H1 (cell line): ENCODE measurements at regions of chr10 and their contacts with region 1.

Region 1: DNA sequence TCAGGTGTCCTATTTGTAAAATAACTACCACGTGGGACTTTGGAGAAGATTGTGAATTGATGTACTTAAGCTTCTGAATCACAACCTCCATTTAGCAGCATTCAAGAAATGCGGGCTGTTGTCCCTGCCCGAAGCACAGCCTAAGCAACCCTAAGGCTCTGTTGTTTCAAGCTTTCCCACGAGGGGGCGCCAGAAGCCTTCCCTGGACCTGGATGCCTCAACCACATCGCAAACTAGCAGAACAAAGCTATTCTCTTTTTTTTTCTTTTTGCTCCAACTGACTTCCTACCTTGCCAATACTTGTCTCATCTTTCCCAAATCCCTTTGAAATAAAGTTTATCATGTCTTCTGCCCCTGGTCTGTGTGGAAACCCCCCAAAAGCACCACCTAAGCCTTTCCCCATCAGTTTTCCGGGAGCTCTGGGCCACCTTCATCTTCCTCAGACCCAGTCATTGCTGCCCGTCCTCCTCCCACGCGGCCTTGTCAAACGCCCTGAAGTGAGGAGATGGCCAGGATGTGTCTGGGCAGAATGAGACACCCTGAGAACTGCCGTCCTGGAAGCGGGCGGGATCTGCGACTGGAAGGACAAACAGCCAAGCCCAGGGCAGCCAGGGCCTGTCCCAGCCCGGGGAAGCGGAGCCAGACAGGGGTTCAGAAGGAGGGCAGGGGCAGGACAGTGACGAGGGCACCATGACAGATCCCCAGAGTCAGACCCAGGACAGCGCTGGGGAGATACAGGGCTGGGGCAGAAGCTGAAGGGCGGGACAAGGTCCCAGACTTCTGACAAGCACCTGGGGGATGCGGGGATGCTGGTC is 112.7 kb downstream of the SLIT1 start:
- DNase-seq: peak; percentile 56 to 98
- H3K4me3 ChIP-seq: no peak overlapping the region
- H3K27ac ChIP-seq: no peak overlapping the region
- H3K4me1 ChIP-seq: peaks cover 0 to 8% (median under 1%) of the 10 kb centered on the region in 4 experiments; a peak in 3 of 7 replicates
- H3K27me3 ChIP-seq: peaks cover 0 to 3% (median 0%) of the 10 kb centered on the region in 4 experiments; a peak in 1 of 7 replicates
- CTCF ChIP-seq: peak; percentile 81 to 97 (median 97)
- EP300 ChIP-seq: peak in 1 of 2 experiments; percentile 22; a peak in 1 of 3 replicates
- POLR2A ChIP-seq: no peak
- RAD21 ChIP-seq: peak; percentile 98

Region 2: GRCh38 chr10:96930469-96930868 is 142.6 kb before region 1 on chr10:
- CTCF ChIA-PET with region 1: no interaction called
- POLR2A ChIA-PET with region 1: no interaction called
- DNase-seq: no peak
- H3K4me3 ChIP-seq: no peak overlapping the region
- H3K27ac ChIP-seq: no peak overlapping the region
- H3K4me1 ChIP-seq: no peaks in the 10 kb centered on the region
- H3K27me3 ChIP-seq: peaks cover 0 to 2% (median 0%) of the 10 kb centered on the region in 4 experiments; a peak in 1 of 7 replicates
- CTCF ChIP-seq: no peak
- EP300 ChIP-seq: no peak
- POLR2A ChIP-seq: no peak
- RAD21 ChIP-seq: no peak

Region 3: GRCh38 chr10:97037365-97038361 is 35.4 kb before region 1 on chr10:
- CTCF ChIA-PET with region 1: interaction called, 109 read pairs
- POLR2A ChIA-PET with region 1: no interaction called
- DNase-seq: peak; percentile 83 to 94
- H3K4me3 ChIP-seq: peak overlapping the region in 2 of 4 experiments; percentile 17 to 25; a peak in 2 of 8 replicates
- H3K27ac ChIP-seq: no peak overlapping the region
- H3K4me1 ChIP-seq: peaks cover under 1 to 7% (median 4%) of the 10 kb centered on the region in 4 experiments; a peak in 6 of 7 replicates
- H3K27me3 ChIP-seq: no peaks in the 10 kb centered on the region; a peak in 1 of 7 replicates
- CTCF ChIP-seq: peak; percentile 90 to 93 (median 90)
- EP300 ChIP-seq: no peak
- POLR2A ChIP-seq: no peak
- RAD21 ChIP-seq: peak; percentile 81 to 90

Region 4: DNA sequence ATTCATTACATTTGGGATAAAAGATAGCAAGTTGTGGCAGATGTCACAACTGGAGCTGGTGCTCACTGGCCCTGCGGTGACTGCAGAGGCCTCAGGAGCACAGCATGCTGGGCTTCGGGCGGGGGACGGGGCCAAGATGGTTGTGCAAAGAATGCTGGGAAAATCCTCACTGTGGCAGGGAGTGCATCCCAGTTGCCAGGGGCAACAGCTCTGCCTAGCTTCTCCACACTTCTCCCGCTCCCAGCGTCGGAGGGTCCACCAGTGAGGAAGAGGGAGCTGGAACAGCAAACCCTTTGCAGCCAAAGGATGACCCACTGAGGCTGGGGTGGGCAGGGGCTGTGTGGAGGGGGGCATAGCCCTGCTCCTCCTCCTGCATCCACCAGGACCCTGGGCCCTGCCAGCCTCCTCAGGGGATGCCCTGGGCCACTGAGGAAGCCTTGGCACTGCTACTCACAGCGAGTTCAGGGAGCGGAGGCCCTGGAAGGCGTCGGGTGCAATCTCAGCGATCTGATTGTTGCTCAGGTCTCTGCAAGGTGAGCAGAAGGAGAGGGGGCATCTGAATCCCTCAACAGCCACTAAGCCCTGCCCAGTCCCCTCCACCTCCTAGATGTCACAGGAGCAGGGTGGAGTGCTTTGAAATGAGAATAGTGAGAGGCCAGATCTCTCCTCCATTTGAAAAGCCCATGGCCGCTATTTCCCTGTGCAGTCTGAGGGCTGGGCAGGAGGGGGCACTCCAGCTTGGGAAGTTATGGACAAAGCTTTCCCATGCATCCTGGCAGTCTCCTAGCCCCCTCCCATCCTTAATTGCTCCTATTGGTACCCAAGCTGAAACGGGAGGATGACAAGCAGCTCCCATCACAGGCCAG is 13.8 kb before region 1 on chr10:
- CTCF ChIA-PET with region 1: interaction called, 335 read pairs
- POLR2A ChIA-PET with region 1: interaction called, 3 read pairs
- DNase-seq: peak in 1 of 2 experiments; percentile 77
- H3K4me3 ChIP-seq: no peak overlapping the region
- H3K27ac ChIP-seq: no peak overlapping the region
- H3K4me1 ChIP-seq: peaks cover 0 to 11% (median 2%) of the 10 kb centered on the region in 4 experiments; a peak in 3 of 7 replicates
- H3K27me3 ChIP-seq: no peaks in the 10 kb centered on the region
- CTCF ChIP-seq: peak; percentile 68 to 71 (median 69)
- EP300 ChIP-seq: no peak
- POLR2A ChIP-seq: no peak
- RAD21 ChIP-seq: peak; percentile 66 to 75

Region 5: GRCh38 chr10:97117372-97117771 is 44.3 kb after region 1 on chr10:
- CTCF ChIA-PET with region 1: interaction called, 759 read pairs
- POLR2A ChIA-PET with region 1: no interaction called
- DNase-seq: no peak
- H3K4me3 ChIP-seq: no peak overlapping the region
- H3K27ac ChIP-seq: no peak overlapping the region
- H3K4me1 ChIP-seq: peaks cover 0 to 4% (median 0%) of the 10 kb centered on the region in 4 experiments; a peak in 2 of 7 replicates
- H3K27me3 ChIP-seq: no peaks in the 10 kb centered on the region
- CTCF ChIP-seq: peak in 2 of 3 experiments; percentile 44 to 59; a peak in 3 of 4 replicates
- EP300 ChIP-seq: no peak
- POLR2A ChIP-seq: no peak
- RAD21 ChIP-seq: peak; percentile 72 to 73

Region 6: GRCh38 chr10:97149079-97149531 is 76.0 kb after region 1 on chr10:
- CTCF ChIA-PET with region 1: interaction called, 13 read pairs
- POLR2A ChIA-PET with region 1: interaction called, 3 read pairs
- DNase-seq: no peak
- H3K4me3 ChIP-seq: no peak overlapping the region
- H3K27ac ChIP-seq: no peak overlapping the region
- H3K4me1 ChIP-seq: peaks cover 0 to 3% (median 0%) of the 10 kb centered on the region in 4 experiments; a peak in 1 of 7 replicates
- H3K27me3 ChIP-seq: no peaks in the 10 kb centered on the region
- CTCF ChIP-seq: no peak
- EP300 ChIP-seq: no peak
- POLR2A ChIP-seq: no peak
- RAD21 ChIP-seq: no peak

Region 7: GRCh38 chr10:97179731-97180362 is 106.8 kb after region 1 on chr10:
- CTCF ChIA-PET with region 1: interaction called, 320 read pairs
- POLR2A ChIA-PET with region 1: no interaction called
- DNase-seq: peak; percentile 31 to 87
- H3K4me3 ChIP-seq: peak overlapping the region in 3 of 4 experiments; percentile 16 to 48 (median 27); a peak in 5 of 8 replicates
- H3K27ac ChIP-seq: no peak overlapping the region
- H3K4me1 ChIP-seq: peaks cover under 1 to 3% (median 2%) of the 10 kb centered on the region in 4 experiments; a peak in 6 of 7 replicates
- H3K27me3 ChIP-seq: peaks cover 10 to 30% (median 22%) of the 10 kb centered on the region in 4 experiments
- CTCF ChIP-seq: peak; percentile 80 to 84 (median 83)
- EP300 ChIP-seq: no peak
- POLR2A ChIP-seq: no peak
- RAD21 ChIP-seq: peak; percentile 80 to 88

Region 8: DNA sequence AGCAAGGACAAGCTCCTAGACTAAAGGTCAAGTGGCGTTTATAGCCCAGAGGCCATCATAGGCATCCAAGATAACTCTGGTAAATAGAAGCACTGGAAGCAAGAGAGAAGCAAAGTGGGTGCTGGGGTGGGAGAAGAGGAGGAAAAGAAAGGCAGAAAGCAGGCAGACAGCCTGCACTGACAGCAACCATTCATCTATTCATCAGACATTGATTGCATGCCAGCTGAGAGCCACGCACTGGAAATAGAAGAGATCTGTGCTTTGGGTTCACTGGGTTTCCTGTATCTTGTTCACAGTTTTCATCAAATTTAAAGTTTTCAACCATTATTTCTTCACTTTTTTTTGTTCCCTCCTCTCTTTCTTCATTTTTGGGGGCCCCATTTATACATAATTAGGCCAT is 117.4 kb after region 1 on chr10:
- CTCF ChIA-PET with region 1: interaction called, 1,348 read pairs
- POLR2A ChIA-PET with region 1: no interaction called
- DNase-seq: no peak
- H3K4me3 ChIP-seq: no peak overlapping the region
- H3K27ac ChIP-seq: no peak overlapping the region
- H3K4me1 ChIP-seq: peaks cover 0 to 17% (median 5%) of the 10 kb centered on the region in 4 experiments; a peak in 5 of 7 replicates
- H3K27me3 ChIP-seq: peaks cover 11 to 29% (median 26%) of the 10 kb centered on the region in 4 experiments
- CTCF ChIP-seq: no peak
- EP300 ChIP-seq: no peak
- POLR2A ChIP-seq: no peak
- RAD21 ChIP-seq: no peak